ENCODE measurements at regions of chr1 and their contacts with region 1.

Region 1: GRCh38 chr1:12215118-12215961 is 14.5 kb upstream of the VPS13D start:
- DNase-seq: no peak

Region 2: GRCh38 chr1:12124693-12125421 is 90.5 kb before region 1 on chr1:
- in situ Hi-C with region 1: loop called (anchors 10 kb)
- DNase-seq: peak; percentile 52